ENCODE measurements at regions of chr4 and their contacts with region 1.

Region 1: GRCh38 chr4:16001484-16001858 is 38.5 kb upstream of the FGFBP2 start:
- DNase-seq: peak; percentile 39 to 91 (median 67)
- H3K4me3 ChIP-seq: no peak overlapping the region
- H3K27ac ChIP-seq: no peak overlapping the region
- H3K4me1 ChIP-seq: no peaks in the 10 kb centered on the region
- H3K27me3 ChIP-seq: no peaks in the 10 kb centered on the region
- CTCF ChIP-seq: peak; percentile 68 to 89 (median 82)
- POLR2A ChIP-seq: no peak

Region 2: GRCh38 chr4:15805583-15806517 is 195.6 kb before region 1 on chr4:
- intact Hi-C with region 1: loop called in 1 of 2 experiments (anchors 10 kb)
- DNase-seq: peak; percentile 23 to 72 (median 41)
- H3K4me3 ChIP-seq: no peak overlapping the region
- H3K27ac ChIP-seq: no peak overlapping the region
- H3K4me1 ChIP-seq: no peaks in the 10 kb centered on the region
- H3K27me3 ChIP-seq: no peaks in the 10 kb centered on the region
- CTCF ChIP-seq: peak; percentile 60 to 76 (median 70)
- POLR2A ChIP-seq: no peak

Region 3: GRCh38 chr4:15882675-15883086 is 118.8 kb before region 1 on chr4:
- intact Hi-C with region 1: loop called (anchors 5 kb)
- DNase-seq: peak; percentile 39 to 75 (median 47)
- H3K4me3 ChIP-seq: no peak overlapping the region
- H3K27ac ChIP-seq: no peak overlapping the region
- H3K4me1 ChIP-seq: no peaks in the 10 kb centered on the region
- H3K27me3 ChIP-seq: no peaks in the 10 kb centered on the region
- CTCF ChIP-seq: peak; percentile 78 to 92 (median 85)
- POLR2A ChIP-seq: no peak

Region 4: DNA sequence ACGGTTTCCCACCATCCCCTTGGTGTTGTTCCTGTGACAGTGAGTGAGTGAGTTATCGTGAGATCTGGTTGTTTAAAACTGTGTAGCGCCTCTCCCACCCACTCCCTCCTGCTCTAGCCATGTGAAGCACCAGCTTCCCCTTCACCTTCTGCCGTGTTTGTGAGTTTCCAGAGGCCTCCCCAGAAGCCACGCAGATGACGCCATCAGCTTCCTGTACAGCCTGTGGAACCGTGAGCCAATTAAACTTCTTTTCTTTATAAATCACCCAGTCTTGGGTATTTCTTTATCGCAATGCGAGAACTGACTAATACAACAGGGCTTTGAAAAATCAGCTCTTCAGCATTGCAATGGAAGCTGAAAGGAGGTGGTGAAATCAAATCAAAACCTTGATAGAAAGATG is 113.0 kb before region 1 on chr4:
- intact Hi-C with region 1: loop called (anchors 5 kb)
- DNase-seq: no peak
- H3K4me3 ChIP-seq: no peak overlapping the region
- H3K27ac ChIP-seq: no peak overlapping the region
- H3K4me1 ChIP-seq: no peaks in the 10 kb centered on the region
- H3K27me3 ChIP-seq: no peaks in the 10 kb centered on the region
- CTCF ChIP-seq: no peak
- POLR2A ChIP-seq: no peak